PC-3 (cell line): ENCODE measurements at regions of chr16 and their contacts with region 1.

Region 1: GRCh38 chr16:22117609-22118008 is 25.3 kb downstream of the VWA3A start:
- DNase-seq: peak; percentile 13
- ATAC-seq: no peak
- H3K4me3 ChIP-seq: no peak overlapping the region
- H3K27ac ChIP-seq: no peak overlapping the region
- H3K4me1 ChIP-seq: no peaks in the 10 kb centered on the region
- H3K27me3 ChIP-seq: no peaks in the 10 kb centered on the region
- CTCF ChIP-seq: no peak

Region 2: GRCh38 chr16:22948603-22949368 is 831.2 kb after region 1 on chr16:
- CTCF ChIA-PET with region 1: no interaction called
- POLR2A ChIA-PET with region 1: interaction called, 24 read pairs
- intact Hi-C with region 1: no loop called
- DNase-seq: peak; percentile 68
- ATAC-seq: peak; percentile 62
- H3K4me3 ChIP-seq: no peak overlapping the region
- H3K27ac ChIP-seq: no peak overlapping the region
- H3K4me1 ChIP-seq: no peaks in the 10 kb centered on the region
- H3K27me3 ChIP-seq: 0 out of 2 replicates have a peak, but pooled peaks cover 7% of the 10 kb centered on the region
- CTCF ChIP-seq: peak; percentile 85